GM12878 (cell line): ENCODE measurements at regions of chr11 and their contacts with region 1.

Region 1: GRCh38 chr11:59668950-59669610 is at the start of gene PATL1:
- DNase-seq: peak; percentile 94
- ATAC-seq: peak; percentile 95
- H3K4me3 ChIP-seq: peak within 1 kb of the TSS; percentile 98
- H3K27ac ChIP-seq: peak within 1 kb of the TSS; percentile 86
- H3K4me1 ChIP-seq: no peaks in the 10 kb centered on the region; the same call in 1 of the 2 replicates
- H3K27me3 ChIP-seq: no peaks in the 10 kb centered on the region
- CTCF ChIP-seq: no peak
- EP300 ChIP-seq: peak; percentile 10 to 45; a peak in 2 of 4 replicates
- POLR2A ChIP-seq: peak; percentile 81
- RAD21 ChIP-seq: no peak
- polyA plus RNA-seq, gene PATL1: 5.3 to 5.9 TPM

Region 2: GRCh38 chr11:59534676-59535075 is 134.4 kb before region 1 on chr11:
- CTCF ChIA-PET with region 1: interaction called, 9 read pairs
- POLR2A ChIA-PET with region 1: interaction called, 4 read pairs
- RAD21 ChIA-PET with region 1: interaction called, 9 read pairs
- SMC1A ChIA-PET with region 1: interaction called, 5 read pairs
- in situ Hi-C with region 1: loop called (anchors 10 kb)
- intact Hi-C with region 1: no loop called
- DNase-seq: no peak
- ATAC-seq: no peak
- H3K4me3 ChIP-seq: no peak overlapping the region
- H3K27ac ChIP-seq: no peak overlapping the region
- H3K4me1 ChIP-seq: no peaks in the 10 kb centered on the region
- H3K27me3 ChIP-seq: no peaks in the 10 kb centered on the region
- CTCF ChIP-seq: no peak
- EP300 ChIP-seq: no peak
- POLR2A ChIP-seq: no peak
- RAD21 ChIP-seq: no peak

Region 3: GRCh38 chr11:59550368-59550841 is 118.7 kb before region 1 on chr11:
- CTCF ChIA-PET with region 1: no interaction called
- POLR2A ChIA-PET with region 1: interaction called, 4 read pairs
- RAD21 ChIA-PET with region 1: interaction called, 4 read pairs
- SMC1A ChIA-PET with region 1: interaction called, 6 read pairs
- in situ Hi-C with region 1: loop called (anchors 5 kb)
- intact Hi-C with region 1: loop called (anchors 2 kb)
- DNase-seq: peak; percentile 96
- ATAC-seq: peak; percentile 96
- H3K4me3 ChIP-seq: peak overlapping the region; percentile 74
- H3K27ac ChIP-seq: peak overlapping the region; percentile 83
- H3K4me1 ChIP-seq: no peaks in the 10 kb centered on the region
- H3K27me3 ChIP-seq: no peaks in the 10 kb centered on the region
- CTCF ChIP-seq: peak; percentile 39 to 59 (median 57)
- EP300 ChIP-seq: peak in 1 of 2 experiments; percentile 57; a peak in 1 of 4 replicates
- POLR2A ChIP-seq: peak; percentile 40; the same call in 1 of the 2 replicates
- RAD21 ChIP-seq: no peak

Region 4: GRCh38 chr11:59615637-59616395 is 53.3 kb before region 1 on chr11 and contains the start of gene OSBP:
- CTCF ChIA-PET with region 1: interaction called, 10 read pairs
- POLR2A ChIA-PET with region 1: interaction called, 26 read pairs
- RAD21 ChIA-PET with region 1: interaction called, 16 read pairs
- SMC1A ChIA-PET with region 1: interaction called, 9 read pairs
- in situ Hi-C with region 1: no loop called
- intact Hi-C with region 1: loop called (anchors 2 kb)
- DNase-seq: peak; percentile 100
- ATAC-seq: peak; percentile 93
- H3K4me3 ChIP-seq: peak within 1 kb of the TSS; percentile 91
- H3K27ac ChIP-seq: peak within 1 kb of the TSS; percentile 69
- H3K4me1 ChIP-seq: no peaks in the 10 kb centered on the region; the same call in none of the 2 replicates
- H3K27me3 ChIP-seq: no peaks in the 10 kb centered on the region
- CTCF ChIP-seq: no peak
- EP300 ChIP-seq: no peak
- POLR2A ChIP-seq: peak; percentile 89
- RAD21 ChIP-seq: no peak
- polyA plus RNA-seq, gene OSBP: 9.8 to 10.7 TPM

Region 5: GRCh38 chr11:59680287-59681154 is 11.4 kb after region 1 on chr11:
- CTCF ChIA-PET with region 1: interaction called, 15 read pairs
- POLR2A ChIA-PET with region 1: interaction called, 3 read pairs
- RAD21 ChIA-PET with region 1: interaction called, 7 read pairs
- SMC1A ChIA-PET with region 1: interaction called, 3 read pairs
- in situ Hi-C with region 1: no loop called
- intact Hi-C with region 1: no loop called
- DNase-seq: peak; percentile 20
- ATAC-seq: peak; percentile 99
- H3K4me3 ChIP-seq: no peak overlapping the region
- H3K27ac ChIP-seq: no peak overlapping the region
- H3K4me1 ChIP-seq: no peaks in the 10 kb centered on the region
- H3K27me3 ChIP-seq: no peaks in the 10 kb centered on the region
- CTCF ChIP-seq: peak; percentile 76 to 92 (median 80)
- EP300 ChIP-seq: no peak
- POLR2A ChIP-seq: no peak
- RAD21 ChIP-seq: peak; percentile 78

Region 6: GRCh38 chr11:59810189-59810910 is 141.3 kb after region 1 on chr11 and contains the start of gene MRPL16:
- CTCF ChIA-PET with region 1: no interaction called
- POLR2A ChIA-PET with region 1: no interaction called
- RAD21 ChIA-PET with region 1: no interaction called
- SMC1A ChIA-PET with region 1: interaction called, 4 read pairs
- in situ Hi-C with region 1: no loop called
- intact Hi-C with region 1: loop called (anchors 5 kb)
- DNase-seq: peak; percentile 69
- ATAC-seq: peak; percentile 99
- H3K4me3 ChIP-seq: peak within 1 kb of the TSS; percentile 87
- H3K27ac ChIP-seq: peak within 1 kb of the TSS; percentile 67
- H3K4me1 ChIP-seq: no peaks in the 10 kb centered on the region; the same call in 1 of the 2 replicates
- H3K27me3 ChIP-seq: no peaks in the 10 kb centered on the region
- CTCF ChIP-seq: peak; percentile 8 to 44 (median 41); a peak in 5 of 6 replicates
- EP300 ChIP-seq: no peak
- POLR2A ChIP-seq: peak; percentile 95
- RAD21 ChIP-seq: no peak
- polyA plus RNA-seq, gene MRPL16: 38.2 to 75.0 TPM

Region 7: GRCh38 chr11:59841514-59841913 is 172.4 kb after region 1 on chr11:
- CTCF ChIA-PET with region 1: no interaction called
- POLR2A ChIA-PET with region 1: no interaction called
- RAD21 ChIA-PET with region 1: no interaction called
- SMC1A ChIA-PET with region 1: no interaction called
- in situ Hi-C with region 1: no loop called
- intact Hi-C with region 1: no loop called
- DNase-seq: no peak
- ATAC-seq: peak; percentile 49; the same call in 2 of the 3 replicates
- H3K4me3 ChIP-seq: no peak overlapping the region
- H3K27ac ChIP-seq: no peak overlapping the region
- H3K4me1 ChIP-seq: no peaks in the 10 kb centered on the region
- H3K27me3 ChIP-seq: no peaks in the 10 kb centered on the region; a peak in 1 of 4 replicates
- CTCF ChIP-seq: no peak
- EP300 ChIP-seq: no peak
- POLR2A ChIP-seq: no peak
- RAD21 ChIP-seq: no peak